ENCODE measurements at regions of chr1 and their contacts with region 1.

Region 1: DNA sequence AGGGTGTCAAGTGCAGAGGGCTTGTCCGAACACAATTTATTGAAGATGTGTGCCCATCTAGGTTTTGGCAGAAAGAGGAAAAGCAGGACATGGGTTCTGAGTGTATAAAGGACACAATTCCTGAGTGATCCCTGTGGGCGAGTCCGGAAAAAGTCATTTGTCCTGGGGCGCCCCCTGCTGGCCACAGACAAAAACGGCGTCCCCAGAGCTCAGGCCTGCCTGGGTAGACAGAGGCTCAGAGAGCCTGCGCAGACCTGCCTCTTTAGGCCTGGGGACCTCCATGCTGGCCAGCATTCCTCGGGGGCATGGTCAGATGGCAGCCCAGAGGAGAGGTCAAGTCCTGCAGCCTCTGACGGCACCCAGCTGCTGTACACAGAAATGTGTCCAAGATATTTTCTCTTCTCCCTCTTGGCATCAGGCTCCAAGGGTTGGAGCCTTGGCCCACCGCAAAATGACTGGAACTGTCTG is 65.5 kb upstream of the LRP8 start:
- DNase-seq: peak; percentile 74
- ATAC-seq: peak; percentile 80
- H3K4me3 Mint-ChIP-seq: no peak overlapping the region
- H3K27ac Mint-ChIP-seq: no peak overlapping the region
- H3K4me1 Mint-ChIP-seq: peaks cover 8% of the 10 kb centered on the region
- H3K27me3 Mint-ChIP-seq: peaks cover 3% of the 10 kb centered on the region

Region 2: GRCh38 chr1:53153752-53154151 is 239.6 kb before region 1 on chr1:
- CTCF ChIA-PET with region 1: no interaction called
- POLR2A ChIA-PET with region 1: no interaction called
- DNase-seq: no peak
- ATAC-seq: no peak
- H3K4me3 Mint-ChIP-seq: no peak overlapping the region
- H3K27ac Mint-ChIP-seq: no peak overlapping the region
- H3K4me1 Mint-ChIP-seq: no peaks in the 10 kb centered on the region
- H3K27me3 Mint-ChIP-seq: peaks cover 14% of the 10 kb centered on the region

Region 3: DNA sequence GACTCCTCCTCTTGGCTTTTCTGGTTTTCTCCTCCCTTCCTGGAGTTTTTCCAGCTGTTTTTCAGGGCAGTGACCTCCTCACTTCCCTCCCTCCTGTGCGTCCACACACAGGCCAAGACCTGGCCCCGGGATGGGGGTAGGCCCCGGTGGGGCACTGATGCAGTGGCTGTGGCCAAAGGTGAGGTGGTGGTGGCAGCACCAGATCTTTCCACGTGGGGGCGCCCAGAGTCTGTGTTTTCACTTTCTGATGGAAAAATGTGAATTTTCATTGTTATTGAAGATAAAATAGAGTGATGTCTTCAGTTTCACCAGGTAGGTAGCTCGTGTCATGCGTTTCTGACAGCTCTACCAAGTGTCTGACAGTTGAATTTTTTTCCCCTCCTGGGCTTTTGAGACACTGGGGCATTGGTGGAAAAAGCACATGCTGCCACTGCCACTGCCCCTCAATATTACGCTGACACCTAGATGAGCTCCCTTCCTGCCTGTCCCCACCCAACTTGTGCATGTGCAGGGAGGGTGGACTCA is 115.1 kb before region 1 on chr1:
- CTCF ChIA-PET with region 1: interaction called, 167 read pairs
- POLR2A ChIA-PET with region 1: interaction called, 4 read pairs
- DNase-seq: peak; percentile 78
- ATAC-seq: peak; percentile 72
- H3K4me3 Mint-ChIP-seq: no peak overlapping the region
- H3K27ac Mint-ChIP-seq: no peak overlapping the region
- H3K4me1 Mint-ChIP-seq: no peaks in the 10 kb centered on the region
- H3K27me3 Mint-ChIP-seq: no peaks in the 10 kb centered on the region

Region 4: GRCh38 chr1:53294567-53294966 is 98.8 kb before region 1 on chr1:
- CTCF ChIA-PET with region 1: interaction called, 20 read pairs
- POLR2A ChIA-PET with region 1: no interaction called
- DNase-seq: peak; percentile 27
- ATAC-seq: no peak
- H3K4me3 Mint-ChIP-seq: no peak overlapping the region
- H3K27ac Mint-ChIP-seq: peak overlapping the region; percentile 78
- H3K4me1 Mint-ChIP-seq: peaks cover 63% of the 10 kb centered on the region
- H3K27me3 Mint-ChIP-seq: no peaks in the 10 kb centered on the region

Region 5: DNA sequence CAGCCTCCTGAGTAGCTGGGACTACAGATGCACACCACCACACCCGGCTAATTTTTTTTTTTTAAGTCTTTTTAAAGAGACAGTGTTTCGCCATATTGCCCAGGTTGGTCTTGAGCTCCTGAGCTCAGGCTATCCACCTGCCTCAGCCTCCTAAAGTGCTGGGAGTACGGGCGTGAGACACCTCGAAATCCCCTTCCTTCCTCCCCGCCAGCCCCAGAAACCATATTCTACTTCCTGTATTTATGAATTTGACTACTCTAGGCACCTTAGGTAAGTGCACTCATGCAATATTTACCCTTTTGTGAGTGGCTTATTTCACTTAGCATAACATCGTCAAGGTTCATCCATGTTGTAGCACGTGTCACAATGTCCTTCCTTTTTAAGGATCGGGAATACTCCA is 58.6 kb before region 1 on chr1:
- CTCF ChIA-PET with region 1: interaction called, 10 read pairs
- POLR2A ChIA-PET with region 1: no interaction called
- DNase-seq: no peak
- ATAC-seq: peak; percentile 68
- H3K4me3 Mint-ChIP-seq: no peak overlapping the region
- H3K27ac Mint-ChIP-seq: peak overlapping the region; percentile 23
- H3K4me1 Mint-ChIP-seq: peaks cover 22% of the 10 kb centered on the region
- H3K27me3 Mint-ChIP-seq: no peaks in the 10 kb centered on the region

Region 6: DNA sequence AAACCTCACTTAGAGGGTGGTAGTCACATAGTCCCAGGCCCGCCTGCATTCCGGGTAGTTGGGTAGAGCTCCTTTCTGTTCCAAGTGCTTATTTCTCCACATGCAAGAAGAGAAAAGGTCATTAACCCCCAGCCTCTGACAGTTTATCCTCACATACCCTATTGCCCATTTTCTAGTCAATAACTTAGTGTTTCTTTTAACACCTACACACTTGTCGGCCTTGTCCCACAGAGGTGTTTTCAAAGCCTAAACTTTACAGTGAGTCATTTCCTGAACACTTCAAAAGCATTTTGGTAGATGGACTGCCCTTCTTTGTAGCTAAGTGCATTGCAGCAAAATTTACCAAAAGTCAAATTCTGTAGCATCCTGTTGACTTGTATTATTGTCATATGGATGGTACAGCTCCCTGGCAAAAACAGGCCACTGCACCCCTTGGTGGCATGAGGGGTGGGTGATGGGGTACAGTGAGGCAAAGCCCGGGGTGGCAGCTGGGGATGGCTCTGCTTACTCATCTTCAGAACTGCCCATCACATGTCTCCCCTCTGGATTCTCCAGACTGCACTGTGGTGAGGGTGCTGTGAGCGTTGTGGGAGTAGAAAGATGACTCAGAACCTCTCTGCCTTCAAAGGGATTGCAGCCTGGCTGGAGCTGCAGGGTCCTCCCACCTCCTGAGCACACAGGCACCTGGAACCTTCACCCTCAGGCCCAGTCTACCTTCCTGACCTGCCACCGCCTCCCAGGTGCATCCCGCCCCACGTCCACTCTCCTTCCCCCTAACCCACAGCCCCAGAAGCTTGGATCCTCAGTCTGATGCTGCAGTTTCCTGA is 20.0 kb after region 1 on chr1:
- CTCF ChIA-PET with region 1: interaction called, 34 read pairs
- POLR2A ChIA-PET with region 1: interaction called, 4 read pairs
- DNase-seq: peak; percentile 76
- ATAC-seq: peak; percentile 92
- H3K4me3 Mint-ChIP-seq: peak overlapping the region; percentile 47
- H3K27ac Mint-ChIP-seq: peak overlapping the region; percentile 99
- H3K4me1 Mint-ChIP-seq: peaks cover 68% of the 10 kb centered on the region
- H3K27me3 Mint-ChIP-seq: no peaks in the 10 kb centered on the region